ENCODE measurements at regions of chr15 and their contacts with region 1.

Region 1: DNA sequence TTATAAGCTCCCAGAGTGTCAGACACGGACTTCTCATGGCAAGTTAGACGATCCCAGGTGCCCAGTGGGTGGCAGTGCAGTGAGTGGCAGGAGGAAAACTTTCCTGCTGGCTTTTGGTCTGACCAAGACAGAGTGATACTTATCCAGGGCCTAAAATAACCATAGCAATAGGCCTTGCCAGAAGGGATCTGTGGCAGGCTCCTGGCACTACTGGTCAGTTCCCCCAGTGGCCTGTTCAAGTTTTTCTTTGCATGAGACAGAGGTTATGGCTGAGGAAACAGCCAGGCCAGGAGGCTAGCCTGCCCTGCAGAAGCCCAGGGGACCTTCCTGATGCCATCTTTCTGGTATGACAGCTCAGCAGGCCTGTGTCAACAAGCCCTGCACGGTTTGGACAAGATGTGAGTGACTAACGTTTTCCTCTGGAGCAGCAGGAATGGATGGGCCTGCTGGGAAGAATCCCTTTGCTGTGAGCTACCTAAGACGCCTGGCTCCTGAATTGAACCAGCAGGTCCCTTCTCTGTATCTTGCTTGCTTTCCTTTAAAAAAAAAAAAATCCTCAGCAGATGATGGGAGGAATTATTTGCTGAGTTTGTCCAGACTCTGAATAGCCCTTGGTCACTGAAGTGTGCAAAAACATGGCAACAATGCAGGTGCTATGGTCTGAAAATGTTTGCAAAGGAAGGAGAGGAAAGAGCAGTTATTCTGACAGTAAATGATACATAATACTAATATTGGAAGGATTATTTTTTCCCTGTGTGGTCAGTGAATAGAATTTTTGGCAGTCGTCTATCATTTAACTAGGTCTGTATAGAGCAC is 18.0 kb downstream of the SCG5 start:
- DNase-seq: peak in 1 of 2 donors; percentile 78
- H3K4me3 ChIP-seq: no peak overlapping the region
- H3K27ac ChIP-seq: peak overlapping the region; percentile 12 to 31
- H3K4me1 ChIP-seq: peaks cover 3 to 4% of the 10 kb centered on the region in 2 donors
- H3K27me3 ChIP-seq: no peaks in the 10 kb centered on the region
- CTCF ChIP-seq: peak in 2 of 3 experiments; percentile 8 to 9

Region 2: GRCh38 chr15:32844118-32844711 is 184.7 kb after region 1 on chr15:
- intact Hi-C with region 1: loop called (anchors 5 kb)
- DNase-seq: no peak
- H3K4me3 ChIP-seq: no peak overlapping the region
- H3K27ac ChIP-seq: no peak overlapping the region
- H3K4me1 ChIP-seq: no peaks in the 10 kb centered on the region
- H3K27me3 ChIP-seq: no peaks in the 10 kb centered on the region
- CTCF ChIP-seq: peak; percentile 27 to 67 (median 57)

Region 3: GRCh38 chr15:32994810-32995424 is 335.4 kb after region 1 on chr15:
- intact Hi-C with region 1: loop called (anchors 2 kb)
- DNase-seq: no peak
- H3K4me3 ChIP-seq: no peak overlapping the region
- H3K27ac ChIP-seq: no peak overlapping the region
- H3K4me1 ChIP-seq: no peaks in the 10 kb centered on the region
- H3K27me3 ChIP-seq: no peaks in the 10 kb centered on the region
- CTCF ChIP-seq: peak in 2 of 3 experiments; percentile 47 to 63

Region 4: GRCh38 chr15:33132722-33133345 is 473.3 kb after region 1 on chr15:
- intact Hi-C with region 1: loop called (anchors 5 kb)
- DNase-seq: no peak
- H3K4me3 ChIP-seq: no peak overlapping the region
- H3K27ac ChIP-seq: no peak overlapping the region
- H3K4me1 ChIP-seq: no peaks in the 10 kb centered on the region
- H3K27me3 ChIP-seq: no peaks in the 10 kb centered on the region
- CTCF ChIP-seq: peak; percentile 33 to 60 (median 37)